ENCODE measurements at regions of chr1 and their contacts with region 1.

Region 1: GRCh38 chr1:168360151-168361021 is 79.7 kb downstream of the TBX19 start:
- DNase-seq: peak; percentile 39
- H3K4me3 Mint-ChIP-seq: peak overlapping the region; percentile 18
- H3K27ac Mint-ChIP-seq: peak overlapping the region; percentile 92
- H3K4me1 Mint-ChIP-seq: peaks cover 69% of the 10 kb centered on the region
- H3K27me3 Mint-ChIP-seq: no peaks in the 10 kb centered on the region

Region 2: DNA sequence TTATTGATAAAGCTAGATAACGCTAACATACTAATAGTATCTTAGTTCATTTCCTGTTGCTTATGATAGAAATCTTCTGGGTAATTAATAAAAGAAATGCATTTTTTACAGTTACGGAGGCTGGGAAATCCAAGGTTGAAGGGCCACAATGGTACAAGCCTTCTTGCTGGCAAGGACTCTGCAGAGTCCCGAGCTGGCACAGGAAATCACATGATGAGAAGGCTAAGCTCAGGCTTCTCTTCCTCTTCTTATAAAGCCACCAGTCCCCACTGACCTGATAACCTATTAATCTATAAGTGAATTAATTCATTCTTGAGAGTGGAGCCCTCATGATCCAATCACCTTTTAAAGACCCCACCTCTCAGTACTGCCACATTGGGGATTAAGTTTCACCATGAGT is 306.3 kb before region 1 on chr1:
- intact Hi-C with region 1: no loop called
- DNase-seq: no peak
- H3K4me3 Mint-ChIP-seq: no peak overlapping the region
- H3K27ac Mint-ChIP-seq: no peak overlapping the region
- H3K4me1 Mint-ChIP-seq: peaks cover 5% of the 10 kb centered on the region
- H3K27me3 Mint-ChIP-seq: no peaks in the 10 kb centered on the region

Region 3: GRCh38 chr1:168287237-168287664 is 73.1 kb before region 1 on chr1:
- intact Hi-C with region 1: loop called (anchors 1 kb)
- DNase-seq: no peak
- H3K4me3 Mint-ChIP-seq: no peak overlapping the region
- H3K27ac Mint-ChIP-seq: peak overlapping the region; percentile 43
- H3K4me1 Mint-ChIP-seq: peaks cover 27% of the 10 kb centered on the region
- H3K27me3 Mint-ChIP-seq: no peaks in the 10 kb centered on the region

Region 4: GRCh38 chr1:168386949-168387586 is 26.7 kb after region 1 on chr1:
- intact Hi-C with region 1: loop called (anchors 2 kb)
- DNase-seq: peak; percentile 62
- H3K4me3 Mint-ChIP-seq: peak overlapping the region; percentile 48
- H3K27ac Mint-ChIP-seq: peak overlapping the region; percentile 74
- H3K4me1 Mint-ChIP-seq: peaks cover 17% of the 10 kb centered on the region
- H3K27me3 Mint-ChIP-seq: peaks cover 6% of the 10 kb centered on the region

Region 5: GRCh38 chr1:168421399-168422004 is 61.1 kb after region 1 on chr1:
- intact Hi-C with region 1: loop called (anchors 5 kb)
- DNase-seq: no peak
- H3K4me3 Mint-ChIP-seq: peak overlapping the region; percentile 15
- H3K27ac Mint-ChIP-seq: peak overlapping the region; percentile 72
- H3K4me1 Mint-ChIP-seq: peaks cover 29% of the 10 kb centered on the region
- H3K27me3 Mint-ChIP-seq: no peaks in the 10 kb centered on the region

Region 6: GRCh38 chr1:168572633-168573032 is 212.2 kb after region 1 on chr1:
- intact Hi-C with region 1: loop called (anchors 5 kb)
- DNase-seq: no peak
- H3K4me3 Mint-ChIP-seq: no peak overlapping the region
- H3K27ac Mint-ChIP-seq: peak overlapping the region; percentile 2
- H3K4me1 Mint-ChIP-seq: peaks cover 33% of the 10 kb centered on the region
- H3K27me3 Mint-ChIP-seq: peaks cover 9% of the 10 kb centered on the region

Region 7: GRCh38 chr1:169485544-169486278 is 1125.3 kb after region 1 on chr1 and contains the start of gene SLC19A2:
- intact Hi-C with region 1: loop called (anchors 1 kb)
- DNase-seq: peak; percentile 94
- H3K4me3 Mint-ChIP-seq: peak within 1 kb of the TSS; percentile 89
- H3K27ac Mint-ChIP-seq: peak within 1 kb of the TSS; percentile 90
- H3K4me1 Mint-ChIP-seq: peaks cover 59% of the 10 kb centered on the region
- H3K27me3 Mint-ChIP-seq: no peaks in the 10 kb centered on the region
- total RNA-seq, gene SLC19A2: 11.2 and 11.9 TPM in 2 replicates

Measured in activated T-helper 2 cell treated with anti-CD3 and anti-CD28 coated beads, Interferon-gamma antibody, Interleukin-2, Interleukin-4, amounts not matched to agents 10 μg/mL and 5 μg/mL and 100 μg/mL, durations not matched to agents 14 hours and 24 hours and 36 hours (primary cell).